Activated naive CD4-positive, alpha-beta T cell treated with anti-CD3 and anti-CD28 coated beads for 36 hours (primary cell): ENCODE measurements at regions of chr4 and their contacts with region 1.

Region 1: GRCh38 chr4:121252224-121252806 is 88.2 kb upstream of the TNIP3 start:
- DNase-seq: peak; percentile 73
- H3K4me3 Mint-ChIP-seq: no peak overlapping the region
- H3K27ac Mint-ChIP-seq: no peak overlapping the region
- H3K4me1 Mint-ChIP-seq: peaks cover 60% of the 10 kb centered on the region
- H3K27me3 Mint-ChIP-seq: no peaks in the 10 kb centered on the region

Region 2: DNA sequence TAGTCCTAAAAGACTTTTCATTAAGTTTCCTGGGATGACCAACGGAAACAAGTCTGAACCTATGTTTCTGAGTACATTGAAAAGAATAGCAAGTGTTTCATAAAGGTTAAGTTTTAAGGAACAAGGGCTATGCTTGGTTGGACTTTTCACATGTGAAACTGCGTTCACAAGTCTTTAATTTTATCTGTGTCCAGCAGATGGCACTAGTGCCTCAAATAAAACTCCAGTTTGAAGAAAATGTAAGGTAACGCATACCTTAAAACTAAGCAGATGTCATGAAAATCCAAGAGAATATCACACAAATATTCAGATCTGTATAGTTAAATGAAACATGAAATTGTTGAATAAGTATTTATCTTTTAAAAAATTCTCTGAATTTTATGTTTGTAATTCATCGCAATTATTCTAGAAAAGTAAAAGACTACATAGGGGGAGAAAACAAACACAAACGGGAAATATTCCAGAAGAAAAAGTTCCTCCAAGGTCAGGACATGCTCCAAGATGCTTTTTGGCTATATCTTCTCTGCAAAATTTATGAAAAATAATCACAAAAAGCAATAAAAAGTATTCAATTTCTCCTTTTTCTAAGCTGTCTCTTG is 1096.1 kb before region 1 on chr4:
- CTCF ChIA-PET with region 1: no interaction called
- intact Hi-C with region 1: loop called (anchors 5 kb)
- DNase-seq: peak; percentile 32
- H3K4me3 Mint-ChIP-seq: no peak overlapping the region
- H3K27ac Mint-ChIP-seq: no peak overlapping the region
- H3K4me1 Mint-ChIP-seq: no peaks in the 10 kb centered on the region
- H3K27me3 Mint-ChIP-seq: no peaks in the 10 kb centered on the region

Region 3: GRCh38 chr4:121041307-121042090 is 210.8 kb before region 1 on chr4:
- CTCF ChIA-PET with region 1: no interaction called
- intact Hi-C with region 1: loop called (anchors 1 kb)
- DNase-seq: peak; percentile 53
- H3K4me3 Mint-ChIP-seq: no peak overlapping the region
- H3K27ac Mint-ChIP-seq: no peak overlapping the region
- H3K4me1 Mint-ChIP-seq: peaks cover 13% of the 10 kb centered on the region
- H3K27me3 Mint-ChIP-seq: no peaks in the 10 kb centered on the region

Region 4: DNA sequence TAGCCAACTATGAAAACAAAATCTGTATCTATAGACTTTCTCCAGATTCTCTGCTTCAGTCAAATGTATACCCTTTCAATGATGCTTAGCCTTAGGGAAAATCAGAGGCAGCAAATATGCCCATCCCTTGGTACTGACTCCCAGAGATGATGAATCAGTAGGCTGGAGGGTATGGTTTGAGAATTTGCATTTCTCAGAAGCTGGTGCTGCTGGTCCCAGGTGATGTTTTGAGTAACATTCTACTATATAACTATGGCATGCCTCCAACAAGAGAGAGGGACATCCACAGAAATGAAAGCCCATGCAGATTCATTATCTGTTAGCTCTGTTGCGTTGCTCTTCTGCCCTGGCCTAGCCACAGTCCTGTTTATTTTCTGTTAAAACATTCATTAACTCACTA is 101.8 kb before region 1 on chr4:
- CTCF ChIA-PET with region 1: interaction called, 3 read pairs
- intact Hi-C with region 1: loop called (anchors 1 kb)
- DNase-seq: peak; percentile 45
- H3K4me3 Mint-ChIP-seq: no peak overlapping the region
- H3K27ac Mint-ChIP-seq: no peak overlapping the region
- H3K4me1 Mint-ChIP-seq: peaks cover 62% of the 10 kb centered on the region
- H3K27me3 Mint-ChIP-seq: no peaks in the 10 kb centered on the region

Region 5: GRCh38 chr4:121182296-121182695 is 70.0 kb before region 1 on chr4:
- CTCF ChIA-PET with region 1: interaction called, 3 read pairs
- intact Hi-C with region 1: loop called (anchors 1 kb)
- DNase-seq: peak; percentile 30
- H3K4me3 Mint-ChIP-seq: peak overlapping the region; percentile 71
- H3K27ac Mint-ChIP-seq: peak overlapping the region; percentile 91
- H3K4me1 Mint-ChIP-seq: peaks cover 60% of the 10 kb centered on the region
- H3K27me3 Mint-ChIP-seq: no peaks in the 10 kb centered on the region

Region 6: GRCh38 chr4:121227341-121227792 is 24.9 kb before region 1 on chr4:
- CTCF ChIA-PET with region 1: interaction called, 7 read pairs
- intact Hi-C with region 1: loop called (anchors 1 kb)
- DNase-seq: no peak
- H3K4me3 Mint-ChIP-seq: peak overlapping the region; percentile 61
- H3K27ac Mint-ChIP-seq: peak overlapping the region; percentile 77
- H3K4me1 Mint-ChIP-seq: peaks cover 56% of the 10 kb centered on the region
- H3K27me3 Mint-ChIP-seq: no peaks in the 10 kb centered on the region

Region 7: DNA sequence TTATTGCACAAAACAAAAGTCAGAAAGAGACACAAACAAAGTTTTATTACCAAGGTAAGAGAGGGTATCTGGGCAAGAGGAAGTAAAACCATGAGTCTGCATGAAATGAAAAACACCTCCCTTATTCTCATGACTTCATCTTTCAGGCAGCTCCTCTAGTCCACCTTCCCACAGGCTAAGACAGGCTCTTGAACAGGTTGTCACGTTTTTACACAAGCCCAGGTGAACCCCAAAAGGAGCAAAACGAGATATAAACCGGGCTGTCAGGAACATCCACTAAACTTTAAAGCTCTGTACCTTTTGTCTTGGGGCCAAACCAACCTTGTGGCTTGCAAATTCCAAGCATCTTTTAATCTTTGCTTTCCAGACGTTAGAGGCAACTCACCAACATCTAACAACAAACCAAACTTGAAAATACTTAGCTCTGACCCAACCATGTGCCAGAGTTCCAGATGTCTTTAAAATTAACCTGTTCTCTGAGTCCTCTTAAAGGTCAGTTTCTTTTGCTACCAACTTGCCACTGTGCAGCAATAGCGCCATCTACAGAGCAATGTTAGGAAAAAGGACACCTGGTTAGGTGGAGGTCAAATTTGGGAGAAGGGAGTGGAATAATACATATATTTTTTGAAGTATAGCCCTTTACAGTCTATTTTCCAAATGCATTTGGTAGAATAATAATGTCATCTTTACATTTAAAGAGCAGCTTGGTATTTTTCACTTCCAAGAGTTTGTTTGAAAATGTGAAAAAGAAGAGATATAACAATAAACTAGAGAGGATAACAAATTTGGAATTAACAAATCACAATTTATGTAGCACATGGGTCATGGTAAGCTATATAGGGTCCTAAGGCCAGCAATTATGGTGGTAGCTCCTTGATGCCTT is 55.4 kb after region 1 on chr4:
- CTCF ChIA-PET with region 1: interaction called, 9 read pairs
- intact Hi-C with region 1: loop called (anchors 1 kb)
- DNase-seq: peak; percentile 71
- H3K4me3 Mint-ChIP-seq: no peak overlapping the region
- H3K27ac Mint-ChIP-seq: no peak overlapping the region
- H3K4me1 Mint-ChIP-seq: peaks cover 15% of the 10 kb centered on the region
- H3K27me3 Mint-ChIP-seq: no peaks in the 10 kb centered on the region

Region 8: GRCh38 chr4:121668368-121669162 is 416.2 kb after region 1 on chr4:
- CTCF ChIA-PET with region 1: no interaction called
- intact Hi-C with region 1: no loop called
- DNase-seq: no peak
- H3K4me3 Mint-ChIP-seq: no peak overlapping the region
- H3K27ac Mint-ChIP-seq: no peak overlapping the region
- H3K4me1 Mint-ChIP-seq: no peaks in the 10 kb centered on the region
- H3K27me3 Mint-ChIP-seq: no peaks in the 10 kb centered on the region